ENCODE measurements at regions of chr12 and their contacts with region 1.

Region 1: GRCh38 chr12:61780435-61780834 is 479.8 kb upstream of the USP15 start:
- DNase-seq: no peak
- ATAC-seq: no peak

Region 2: DNA sequence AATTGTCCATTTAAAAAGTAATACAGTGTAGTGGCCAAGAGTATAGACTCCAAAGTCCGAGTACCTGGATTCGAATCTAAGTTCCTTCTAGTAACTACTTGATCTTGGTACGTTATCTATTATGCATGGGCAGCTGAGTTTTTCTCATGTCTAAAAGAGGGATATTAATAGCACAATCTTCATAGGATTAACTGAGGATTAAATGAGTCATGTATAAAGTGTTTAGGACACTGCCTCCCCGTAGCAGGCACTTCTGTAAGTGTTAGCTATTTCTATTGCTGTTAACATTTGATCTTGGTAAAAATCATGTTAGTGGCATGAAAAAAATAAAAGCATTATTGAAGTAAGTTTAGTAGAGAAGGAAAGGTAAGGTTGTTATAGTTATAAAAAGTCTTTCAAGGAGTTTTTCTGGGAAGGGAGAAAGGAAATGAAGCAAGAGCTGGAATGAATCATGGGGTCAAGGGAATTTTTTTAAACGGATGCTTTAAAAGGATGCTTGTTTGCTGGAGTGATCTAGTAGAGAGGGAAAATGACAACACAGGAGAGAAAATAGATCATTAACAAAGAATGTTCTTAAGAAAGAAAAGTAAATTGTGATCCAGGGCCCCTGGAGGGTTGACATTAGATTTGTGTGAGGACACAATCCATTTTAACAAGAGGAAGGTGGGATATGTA is 22.5 kb before region 1 on chr12:
- intact Hi-C with region 1: loop called in 1 of 2 experiments (anchors 2 kb)
- DNase-seq: no peak
- ATAC-seq: peak in 1 of 2 donors; percentile 65